ENCODE measurements at regions of chr6 and their contacts with region 1.

Region 1: DNA sequence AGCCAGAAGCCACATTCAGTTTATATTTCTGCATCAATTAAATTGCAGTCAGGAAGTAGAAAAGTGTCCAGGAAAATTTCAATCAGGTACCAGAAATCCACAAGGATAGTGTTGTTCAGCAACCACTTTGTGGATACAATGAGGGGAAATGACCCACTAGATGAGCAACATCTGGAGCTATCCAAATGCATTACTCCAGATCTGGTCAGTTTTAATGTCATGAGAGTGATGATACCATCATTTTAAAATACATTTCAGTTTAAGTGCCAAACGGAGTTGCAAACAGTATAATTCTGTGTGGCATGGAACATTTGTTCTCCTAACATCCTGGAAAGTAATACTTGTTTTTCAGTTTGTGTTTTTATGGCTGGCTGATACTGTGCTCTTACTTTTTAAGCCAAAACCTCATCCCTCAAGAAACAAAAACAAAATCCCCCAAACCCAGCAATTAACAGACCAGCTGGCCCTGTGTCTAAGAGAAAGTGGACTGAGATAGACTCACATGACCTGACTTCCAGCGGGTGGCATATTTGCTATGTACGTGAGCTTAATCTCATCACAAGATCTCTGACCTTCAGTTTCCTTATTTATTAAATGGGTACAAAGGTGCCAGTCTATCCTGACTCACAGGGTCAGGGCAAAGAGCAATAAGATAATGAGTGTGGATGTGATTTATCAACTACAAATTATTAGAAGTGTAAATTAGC is 58.8 kb upstream of the CNKSR3 start:
- DNase-seq: peak; percentile 62
- H3K4me3 ChIP-seq: no peak overlapping the region
- H3K27ac ChIP-seq: no peak overlapping the region
- H3K4me1 ChIP-seq: peaks cover 16% of the 10 kb centered on the region
- H3K27me3 ChIP-seq: no peaks in the 10 kb centered on the region
- CTCF ChIP-seq: no peak
- POLR2A ChIP-seq: no peak

Region 2: DNA sequence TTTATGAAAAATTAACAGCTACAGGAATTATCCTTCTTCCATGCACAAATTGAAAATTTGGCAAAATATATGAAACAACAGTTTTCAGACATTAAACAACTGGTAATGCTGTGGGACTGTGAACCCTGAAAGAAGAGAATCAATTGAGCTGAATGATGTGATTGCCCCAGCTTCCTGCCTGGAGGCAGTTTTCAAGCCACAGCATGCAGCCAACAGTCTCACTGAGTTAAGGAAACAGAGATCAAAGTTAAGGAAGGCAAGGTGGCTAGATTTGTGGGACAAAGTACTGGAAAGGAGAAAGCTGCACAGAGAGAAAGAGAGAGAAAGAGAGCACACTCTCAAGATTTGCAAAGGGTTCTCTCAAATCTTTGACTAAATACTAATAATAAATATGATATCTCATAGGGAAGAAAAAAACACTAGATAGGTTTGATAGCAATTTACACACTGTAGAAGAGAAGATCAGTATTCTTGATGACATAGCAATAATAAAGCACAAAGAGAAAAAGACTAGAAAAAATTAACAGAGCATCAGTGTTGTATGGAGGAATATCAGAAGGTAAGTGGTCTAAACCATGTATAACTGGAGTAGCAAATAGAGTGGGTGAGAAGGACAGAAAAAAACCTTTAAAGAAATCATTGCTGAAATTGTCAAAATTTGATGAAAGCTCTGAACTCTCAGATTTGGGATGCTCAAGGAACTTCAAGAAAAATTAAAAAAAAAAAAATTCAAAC is 11.3 kb after region 1 on chr6:
- CTCF ChIA-PET with region 1: interaction called, 4 read pairs
- POLR2A ChIA-PET with region 1: no interaction called
- dilution Hi-C with region 1: no loop called
- intact Hi-C with region 1: loop called (anchors 1 kb)
- DNase-seq: no peak
- H3K4me3 ChIP-seq: no peak overlapping the region
- H3K27ac ChIP-seq: no peak overlapping the region
- H3K4me1 ChIP-seq: no peaks in the 10 kb centered on the region
- H3K27me3 ChIP-seq: no peaks in the 10 kb centered on the region
- CTCF ChIP-seq: no peak
- POLR2A ChIP-seq: no peak

Measured in endothelial cell of umbilical vein (primary cell).